ENCODE measurements at regions of chr22 and their contacts with region 1.

Region 1: GRCh38 chr22:42090596-42091454 is at the start of gene NDUFA6:
- H3K4me3 ChIP-seq: peak within 1 kb of the TSS; percentile 96
- H3K27ac ChIP-seq: peak within 1 kb of the TSS; percentile 78
- H3K4me1 ChIP-seq: no peaks in the 10 kb centered on the region
- CTCF ChIP-seq: peak; percentile 100

Region 2: GRCh38 chr22:41966607-41967240 is 124.1 kb before region 1 on chr22:
- CTCF ChIA-PET with region 1: interaction called, 16 read pairs
- POLR2A ChIA-PET with region 1: interaction called, 11 read pairs
- H3K4me3 ChIP-seq: no peak overlapping the region
- H3K27ac ChIP-seq: no peak overlapping the region
- H3K4me1 ChIP-seq: peaks cover 11% of the 10 kb centered on the region
- CTCF ChIP-seq: peak; percentile 77; the same call in 1 of the 2 replicates

Region 3: GRCh38 chr22:42079319-42080251 is 11.2 kb before region 1 on chr22 and contains the start of gene SMDT1:
- CTCF ChIA-PET with region 1: interaction called, 14 read pairs
- POLR2A ChIA-PET with region 1: interaction called, 56 read pairs
- H3K4me3 ChIP-seq: peak within 1 kb of the TSS; percentile 93
- H3K27ac ChIP-seq: peak within 1 kb of the TSS; percentile 73
- H3K4me1 ChIP-seq: peaks cover 4% of the 10 kb centered on the region; the same call in 1 of the 2 replicates
- CTCF ChIP-seq: no peak

Region 4: GRCh38 chr22:42300259-42301076 is 209.6 kb after region 1 on chr22:
- CTCF ChIA-PET with region 1: no interaction called
- POLR2A ChIA-PET with region 1: no interaction called
- H3K4me3 ChIP-seq: no peak overlapping the region
- H3K27ac ChIP-seq: no peak overlapping the region
- H3K4me1 ChIP-seq: peaks cover 5% of the 10 kb centered on the region
- CTCF ChIP-seq: no peak